Heart left ventricle (tissue), 16 donors: ENCODE measurements at regions of chr18 and their contacts with region 1.

Region 1: GRCh38 chr18:51711298-51711889 is 513.9 kb upstream of the MEX3C start:
- DNase-seq: no peak
- ATAC-seq: no peak
- H3K4me3 ChIP-seq: no peak overlapping the region
- H3K27ac ChIP-seq: no peak overlapping the region
- H3K4me1 ChIP-seq: no peaks in the 10 kb centered on the region
- H3K27me3 ChIP-seq: no peaks in the 10 kb centered on the region
- CTCF ChIP-seq: no peak
- POLR2A ChIP-seq: no peak

Region 2: DNA sequence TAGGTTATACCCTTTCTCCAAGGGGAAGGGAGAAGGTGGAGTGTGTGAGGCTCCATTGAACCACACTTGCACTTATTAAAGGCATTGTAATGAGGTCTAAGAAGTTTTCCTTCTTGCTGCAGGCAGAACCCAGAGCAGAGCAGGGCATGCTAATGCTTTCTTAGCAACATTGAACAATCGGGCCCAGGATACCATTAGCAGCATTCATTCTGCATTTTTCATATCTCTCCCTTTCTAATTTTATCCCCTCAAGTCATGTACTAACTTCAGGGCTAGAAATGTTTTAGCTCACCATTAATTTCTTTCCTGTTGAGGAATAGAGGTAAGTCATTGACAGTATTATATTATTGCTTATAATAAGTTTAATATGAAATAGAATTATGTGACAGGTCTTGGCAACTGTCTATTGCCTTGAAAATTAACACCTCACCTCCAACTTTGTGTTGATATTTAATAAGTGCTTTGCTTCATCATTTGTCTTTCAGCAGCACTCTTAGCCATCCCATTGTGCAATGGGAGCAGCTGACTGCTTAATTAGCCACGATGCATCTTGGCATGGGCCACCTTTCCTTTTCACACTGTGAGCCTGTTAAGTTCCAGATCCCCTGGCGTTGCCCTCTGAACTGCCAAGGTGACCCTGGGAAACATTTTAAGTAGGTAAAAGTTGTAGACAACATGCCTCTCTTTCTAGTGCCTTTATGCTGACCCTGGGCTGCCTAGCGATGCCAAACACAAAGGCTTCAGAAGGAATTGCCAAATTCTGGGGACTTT is 213.1 kb before region 1 on chr18:
- intact Hi-C with region 1: no loop called
- DNase-seq: peak in 4 of 5 donors; percentile 60 to 91 (median 74)
- ATAC-seq: peak; percentile 93 to 98 (median 96)
- H3K4me3 ChIP-seq: no peak overlapping the region
- H3K27ac ChIP-seq: peak overlapping the region in 11 of 12 donors; percentile 2 to 80 (median 64)
- H3K4me1 ChIP-seq: peaks cover 0 to 18% (median 1%) of the 10 kb centered on the region in 12 donors
- H3K27me3 ChIP-seq: no peaks in the 10 kb centered on the region
- CTCF ChIP-seq: no peak
- POLR2A ChIP-seq: no peak

Region 3: DNA sequence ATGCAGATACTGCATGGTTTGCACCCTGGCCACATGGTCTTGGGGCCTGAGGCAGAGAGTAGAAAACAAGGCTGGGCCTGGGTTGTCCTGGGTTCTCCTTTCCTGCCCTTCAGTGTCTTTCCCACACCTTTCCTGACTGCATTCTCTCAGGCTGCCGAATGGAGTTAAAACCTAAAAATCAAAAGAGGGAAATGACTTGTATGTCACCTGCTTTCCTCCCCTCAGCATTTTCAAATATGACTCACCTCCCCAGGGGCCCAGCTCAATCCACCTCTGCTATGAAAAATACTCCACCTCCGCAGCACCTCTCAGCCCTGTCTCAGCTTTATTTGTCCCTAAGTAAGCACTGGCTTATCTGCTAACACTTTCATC is 56.1 kb before region 1 on chr18:
- intact Hi-C with region 1: no loop called
- DNase-seq: no peak
- ATAC-seq: no peak
- H3K4me3 ChIP-seq: no peak overlapping the region
- H3K27ac ChIP-seq: no peak overlapping the region
- H3K4me1 ChIP-seq: no peaks in the 10 kb centered on the region
- H3K27me3 ChIP-seq: peaks cover 0 to 46% (median 0%) of the 10 kb centered on the region in 9 donors
- CTCF ChIP-seq: no peak
- POLR2A ChIP-seq: no peak

Region 4: DNA sequence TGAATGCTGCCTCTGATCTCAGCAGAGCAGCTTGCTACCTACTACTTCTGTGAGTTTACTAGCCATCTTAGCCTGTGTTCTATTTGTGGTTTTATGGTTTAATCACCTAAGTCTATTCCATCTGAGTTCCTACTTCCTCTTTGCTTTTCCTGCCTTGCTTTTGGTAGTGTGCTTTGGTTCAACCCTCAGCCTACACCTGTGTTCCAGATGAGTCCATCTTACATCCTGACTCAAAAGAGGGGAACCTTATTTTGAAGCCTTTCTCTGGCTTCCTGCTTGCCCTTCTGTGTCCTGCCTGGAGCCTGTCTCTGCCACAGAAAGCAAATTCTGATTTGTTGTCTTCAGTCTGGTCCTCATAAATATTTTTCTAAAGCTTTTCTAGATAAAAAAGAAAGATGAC is 16.4 kb after region 1 on chr18:
- intact Hi-C with region 1: no loop called
- DNase-seq: no peak
- ATAC-seq: no peak
- H3K4me3 ChIP-seq: no peak overlapping the region
- H3K27ac ChIP-seq: no peak overlapping the region
- H3K4me1 ChIP-seq: no peaks in the 10 kb centered on the region
- H3K27me3 ChIP-seq: peaks cover 0 to 4% (median 0%) of the 10 kb centered on the region in 9 donors
- CTCF ChIP-seq: no peak
- POLR2A ChIP-seq: no peak

Region 5: DNA sequence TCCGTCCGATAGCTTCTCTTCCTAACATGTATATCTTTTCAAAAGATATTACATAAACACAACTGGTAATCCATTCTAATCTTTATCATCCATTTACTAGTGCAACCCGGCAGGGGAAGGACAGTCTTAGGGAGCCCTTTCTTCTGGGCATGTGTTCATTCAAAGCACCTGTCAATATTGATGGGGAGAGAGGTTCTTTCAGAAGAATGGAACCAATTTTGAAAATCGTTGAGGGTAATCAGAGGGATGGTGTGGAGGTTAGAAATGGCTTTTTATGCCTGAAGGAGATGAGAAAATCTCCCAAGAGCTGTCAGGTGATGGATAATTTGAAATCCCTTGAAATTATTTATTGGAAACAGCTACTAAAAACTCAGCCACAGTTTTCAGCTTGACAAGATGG is 66.7 kb after region 1 on chr18:
- intact Hi-C with region 1: loop called in 1 of 10 experiments (anchors 10 kb)
- DNase-seq: no peak
- ATAC-seq: no peak
- H3K4me3 ChIP-seq: no peak overlapping the region
- H3K27ac ChIP-seq: no peak overlapping the region
- H3K4me1 ChIP-seq: no peaks in the 10 kb centered on the region
- H3K27me3 ChIP-seq: no peaks in the 10 kb centered on the region
- CTCF ChIP-seq: no peak
- POLR2A ChIP-seq: no peak